ENCODE measurements at regions of chr20 and their contacts with region 1.

Region 1: GRCh38 chr20:62567246-62568002 is 74.9 kb upstream of the SLCO4A1 start:
- DNase-seq: no peak
- H3K4me3 ChIP-seq: no peak overlapping the region
- H3K27ac ChIP-seq: peak overlapping the region in 2 of 4 donors; percentile 4 to 53
- H3K4me1 ChIP-seq: peaks cover 0 to 25% (median 15%) of the 10 kb centered on the region in 4 donors
- H3K27me3 ChIP-seq: no peaks in the 10 kb centered on the region
- CTCF ChIP-seq: no peak
- EP300 ChIP-seq: no peak
- POLR2A ChIP-seq: no peak

Region 2: GRCh38 chr20:62529896-62530642 is 37.4 kb before region 1 on chr20:
- intact Hi-C with region 1: loop called (anchors 5 kb)
- DNase-seq: no peak
- H3K4me3 ChIP-seq: no peak overlapping the region
- H3K27ac ChIP-seq: no peak overlapping the region
- H3K4me1 ChIP-seq: peaks cover 0 to 17% (median 9%) of the 10 kb centered on the region in 4 donors
- H3K27me3 ChIP-seq: no peaks in the 10 kb centered on the region
- CTCF ChIP-seq: no peak
- EP300 ChIP-seq: no peak
- POLR2A ChIP-seq: no peak